ENCODE measurements at regions of chr7 and their contacts with region 1.

Region 1: DNA sequence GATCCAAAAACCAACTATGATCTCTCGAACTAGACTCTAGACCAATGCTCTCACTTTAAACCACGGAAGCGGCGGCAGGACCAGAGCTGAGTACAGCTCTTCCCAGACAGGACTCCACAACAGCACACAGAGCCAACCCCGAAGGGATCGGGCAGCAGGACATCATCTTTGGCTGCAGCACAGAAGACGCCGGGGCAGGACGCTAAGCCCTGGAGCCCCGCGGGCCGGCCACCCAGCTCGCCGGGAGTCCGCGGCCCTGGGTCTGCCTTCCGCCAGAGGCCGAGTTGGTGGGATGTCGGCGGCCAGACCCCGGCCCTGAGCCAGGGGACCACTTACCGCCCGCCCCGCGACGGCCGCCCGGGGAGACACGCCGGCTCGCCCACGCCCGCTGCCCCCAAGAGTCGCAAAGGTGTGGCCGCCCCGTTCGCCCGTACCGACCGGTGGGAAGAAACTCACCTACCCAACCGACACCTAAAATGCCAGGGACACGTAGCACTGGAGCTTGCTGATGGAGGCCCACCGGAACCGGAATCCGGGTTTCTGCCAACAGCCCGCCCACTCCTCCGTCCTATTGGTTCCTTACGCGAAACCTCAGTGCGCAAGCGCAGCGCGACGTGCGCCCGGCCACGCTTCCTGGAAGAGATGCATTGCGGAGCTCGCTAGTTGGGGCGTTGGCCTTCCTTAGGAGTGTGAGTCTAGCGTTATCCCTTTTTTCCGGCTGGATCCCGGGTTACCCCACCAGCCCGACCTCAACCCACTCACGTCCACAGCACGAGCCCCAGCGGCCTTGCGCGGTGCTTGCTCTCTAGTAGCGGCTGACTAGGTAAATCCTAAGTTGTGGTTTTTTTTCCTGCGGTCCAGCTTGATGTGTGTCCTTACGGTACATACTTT is at the start of gene SEC61G:
- DNase-seq: peak; percentile 98 to 99
- H3K4me3 ChIP-seq: peak within 1 kb of the TSS; percentile 96 to 99
- H3K27ac ChIP-seq: peak within 1 kb of the TSS; percentile 93 to 97
- H3K4me1 ChIP-seq: peaks cover 0 to 35% (median 17%) of the 10 kb centered on the region in 4 donors
- H3K27me3 ChIP-seq: no peaks in the 10 kb centered on the region
- CTCF ChIP-seq: no peak

Region 2: DNA sequence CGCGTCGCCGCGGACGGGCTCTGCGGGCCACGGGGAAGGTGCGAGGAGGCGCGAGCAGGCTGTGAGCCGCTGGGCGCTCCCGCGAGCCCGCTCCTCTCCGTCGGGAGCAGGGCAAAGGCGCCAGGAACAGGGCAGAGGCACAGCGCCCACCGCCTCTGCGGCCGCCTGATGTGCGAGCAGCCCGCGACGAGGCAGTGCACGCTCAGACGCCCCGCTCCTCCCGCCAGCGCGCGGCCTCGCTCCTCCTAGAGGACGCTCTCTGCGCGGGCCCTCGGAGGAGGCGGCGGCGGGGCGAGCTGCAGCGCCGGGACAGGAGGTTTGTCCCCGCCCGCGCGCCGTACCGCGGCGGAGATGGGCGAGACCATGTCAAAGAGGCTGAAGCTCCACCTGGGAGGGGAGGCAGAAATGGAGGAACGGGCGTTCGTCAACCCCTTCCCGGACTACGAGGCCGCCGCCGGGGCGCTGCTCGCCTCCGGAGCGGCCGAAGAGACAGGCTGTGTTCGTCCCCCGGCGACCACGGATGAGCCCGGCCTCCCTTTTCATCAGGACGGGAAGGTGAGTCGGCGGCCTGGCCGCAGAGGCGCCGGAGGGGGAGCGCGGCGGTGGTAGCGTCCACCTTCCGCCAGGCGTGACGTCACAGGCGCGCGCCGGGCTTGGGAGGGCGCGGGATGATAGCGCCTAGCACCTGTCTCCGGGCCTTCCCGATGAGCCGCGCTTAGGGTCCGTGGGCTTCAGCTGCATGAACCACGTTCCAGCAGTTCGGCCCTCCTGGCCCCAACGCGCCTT is 606.9 kb after region 1 on chr7:
- intact Hi-C with region 1: loop called (anchors 5 kb)
- DNase-seq: peak; percentile 93 to 96
- H3K4me3 ChIP-seq: peak overlapping the region; percentile 82 to 94
- H3K27ac ChIP-seq: peak overlapping the region; percentile 98 to 99
- H3K4me1 ChIP-seq: peaks cover 0 to 24% (median 15%) of the 10 kb centered on the region in 4 donors
- H3K27me3 ChIP-seq: peaks cover 0 to 6% of the 10 kb centered on the region in 2 donors
- CTCF ChIP-seq: peak; percentile 27

Region 3: DNA sequence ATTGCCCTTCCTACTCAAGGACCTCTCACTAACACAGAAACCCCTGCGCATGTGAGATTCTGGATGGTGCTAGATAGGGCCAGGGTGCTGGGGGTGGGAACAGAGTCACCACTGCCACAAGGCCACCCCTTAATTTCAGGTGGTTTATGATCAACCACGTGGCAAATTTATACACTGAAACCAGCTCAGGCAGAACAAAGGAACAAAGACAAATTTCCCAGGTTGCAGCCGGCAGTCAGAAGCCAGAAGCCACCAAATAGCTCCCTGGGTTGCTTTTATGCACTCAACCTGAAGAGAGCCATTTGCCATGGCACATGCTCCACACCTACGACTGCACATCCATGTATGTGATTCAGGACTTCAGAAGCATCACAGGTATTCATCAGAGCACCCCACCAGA is 810.9 kb after region 1 on chr7:
- intact Hi-C with region 1: loop called (anchors 10 kb)
- DNase-seq: no peak
- H3K4me3 ChIP-seq: no peak overlapping the region
- H3K27ac ChIP-seq: peak overlapping the region in 1 of 2 donors; percentile 39
- H3K4me1 ChIP-seq: peaks cover 5 to 57% (median 27%) of the 10 kb centered on the region in 4 donors
- H3K27me3 ChIP-seq: no peaks in the 10 kb centered on the region
- CTCF ChIP-seq: no peak